Pancreas (tissue), 10 donors: ENCODE measurements at regions of chr9 and their contacts with region 1.

Region 1: GRCh38 chr9:77916410-77916819 is 115.2 kb downstream of the GNAQ start:
- DNase-seq: peak in 1 of 6 donors; percentile 2
- ATAC-seq: peak in 3 of 4 donors; percentile 72 to 80 (median 78)
- H3K4me3 ChIP-seq: no peak overlapping the region
- H3K27ac ChIP-seq: peak overlapping the region in 2 of 4 donors; percentile 38 to 53
- H3K4me1 ChIP-seq: peaks cover 5 to 21% (median 21%) of the 10 kb centered on the region in 3 donors
- H3K27me3 ChIP-seq: no peaks in the 10 kb centered on the region
- CTCF ChIP-seq: no peak

Region 2: GRCh38 chr9:78023003-78023741 is 106.8 kb after region 1 on chr9:
- intact Hi-C with region 1: loop called in 1 of 3 experiments (anchors 10 kb)
- DNase-seq: no peak
- ATAC-seq: peak; percentile 63 to 92 (median 90)
- H3K4me3 ChIP-seq: peak overlapping the region in 1 of 4 donors; percentile 7
- H3K27ac ChIP-seq: peak overlapping the region in 3 of 4 donors; percentile 37 to 48 (median 44)
- H3K4me1 ChIP-seq: peaks cover 10 to 45% (median 30%) of the 10 kb centered on the region in 3 donors
- H3K27me3 ChIP-seq: no peaks in the 10 kb centered on the region
- CTCF ChIP-seq: no peak